ENCODE measurements at regions of chr1 and their contacts with region 1.

Region 1: GRCh38 chr1:203273206-203273868 is 32.0 kb upstream of the BTG2 start:
- DNase-seq: peak; percentile 83 to 94
- H3K4me3 ChIP-seq: no peak overlapping the region
- H3K4me1 ChIP-seq: peaks cover 21% of the 10 kb centered on the region
- H3K27me3 ChIP-seq: no peaks in the 10 kb centered on the region

Region 2: DNA sequence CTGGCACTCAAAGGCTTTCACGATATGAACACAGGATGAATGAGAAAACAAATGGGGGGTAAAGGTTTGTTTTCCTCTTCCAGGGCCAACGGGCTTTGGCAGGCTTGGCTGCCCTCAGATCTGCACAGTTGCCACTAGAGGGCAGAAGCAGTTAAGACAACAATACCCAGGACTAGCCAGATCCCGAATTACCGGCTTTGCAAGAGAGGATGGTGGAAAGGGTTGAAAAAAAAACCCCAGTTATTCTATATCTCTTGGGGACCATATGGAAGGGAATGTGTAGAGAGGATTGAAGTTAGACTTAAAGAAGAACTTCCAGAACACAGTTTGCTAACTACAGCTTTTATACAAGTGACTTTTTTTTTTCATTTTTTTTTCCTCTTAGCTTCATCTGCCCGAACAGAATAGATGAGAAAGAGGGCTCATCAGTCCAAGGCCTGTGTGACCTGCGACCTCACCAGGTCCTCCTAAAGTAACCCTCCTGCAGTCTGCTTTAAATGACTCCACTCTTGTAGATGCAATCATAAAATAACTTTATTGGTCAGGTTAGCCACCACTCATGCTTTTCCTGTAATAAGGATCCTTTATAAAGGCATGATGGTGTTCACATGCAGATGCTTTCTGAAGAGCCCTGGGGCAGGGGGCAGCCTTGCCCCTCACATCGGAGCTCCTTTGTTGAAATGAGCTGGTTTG is 66.9 kb after region 1 on chr1:
- in situ Hi-C with region 1: loop called (anchors 5 kb)
- DNase-seq: peak; percentile 77 to 79
- H3K4me3 ChIP-seq: no peak overlapping the region
- H3K4me1 ChIP-seq: peaks cover 9% of the 10 kb centered on the region
- H3K27me3 ChIP-seq: peaks cover 8% of the 10 kb centered on the region

Region 3: GRCh38 chr1:203486618-203487370 is 213.5 kb after region 1 on chr1:
- in situ Hi-C with region 1: loop called (anchors 5 kb)
- DNase-seq: no peak
- H3K4me3 ChIP-seq: no peak overlapping the region; the same call in 1 of the 2 replicates
- H3K4me1 ChIP-seq: no peaks in the 10 kb centered on the region
- H3K27me3 ChIP-seq: no peaks in the 10 kb centered on the region